ENCODE measurements at regions of chr14 and their contacts with region 1.

Region 1: GRCh38 chr14:23487216-23487615 is 17.7 kb downstream of the NGDN start:
- DNase-seq: no peak
- H3K4me3 ChIP-seq: no peak overlapping the region
- CTCF ChIP-seq: no peak

Region 2: DNA sequence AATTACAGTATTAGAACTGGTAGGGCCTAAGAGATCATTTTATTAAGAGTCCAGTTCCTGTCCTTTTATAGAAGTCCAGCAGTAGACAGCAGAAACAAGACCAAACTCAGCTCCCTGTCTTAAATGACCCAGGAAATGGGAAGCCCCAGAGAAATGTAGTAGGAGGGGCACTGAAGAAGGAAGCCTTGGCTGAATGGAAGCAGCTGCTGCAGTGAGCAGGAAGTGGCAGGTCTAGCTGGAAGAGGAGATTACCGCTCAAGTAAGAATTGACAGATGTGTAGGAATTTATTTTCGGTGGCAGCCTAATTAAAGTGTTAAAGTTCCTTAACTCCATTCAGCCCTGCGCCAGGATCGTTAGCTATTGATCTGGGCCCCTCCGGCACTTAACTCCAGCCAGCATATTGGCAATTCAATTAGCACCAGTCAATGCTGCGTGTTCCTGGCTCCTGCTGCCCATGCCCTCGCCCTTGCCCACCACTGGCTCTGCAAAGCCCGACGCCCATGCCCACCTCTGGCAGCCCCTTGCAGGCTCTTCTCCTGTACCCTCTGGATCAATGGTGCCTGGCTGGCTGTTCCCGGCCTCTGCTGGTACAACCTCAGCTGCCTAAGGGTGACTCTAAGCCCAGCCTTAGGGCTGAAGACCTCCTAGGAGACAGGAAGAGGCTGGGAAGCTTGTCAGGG is 43.3 kb after region 1 on chr14:
- in situ Hi-C with region 1: loop called (anchors 5 kb)
- DNase-seq: no peak
- H3K4me3 ChIP-seq: no peak overlapping the region
- CTCF ChIP-seq: no peak

Region 3: DNA sequence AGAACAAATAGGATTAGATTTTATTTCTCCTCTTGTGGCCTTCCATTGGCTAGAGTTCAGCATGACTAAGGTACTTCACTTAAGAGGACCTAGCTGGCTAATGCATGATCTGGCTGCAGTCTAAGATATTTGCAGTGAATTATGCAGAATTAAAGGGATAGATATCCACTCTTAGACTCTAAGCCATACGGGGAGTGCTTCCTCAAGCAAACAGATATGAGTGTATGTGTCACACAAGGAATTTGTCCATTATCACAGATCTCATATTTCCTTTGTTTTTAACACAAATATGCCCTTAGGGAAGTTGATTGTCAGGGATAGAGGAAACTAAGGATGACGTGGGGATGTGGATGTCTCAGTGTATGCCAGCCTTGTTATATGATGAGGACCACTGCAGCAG is 378.3 kb after region 1 on chr14:
- in situ Hi-C with region 1: no loop called
- DNase-seq: no peak
- H3K4me3 ChIP-seq: no peak overlapping the region
- CTCF ChIP-seq: no peak

Measured in astrocyte of the cerebellum (primary cell).